Activated B cell treated with CpG ODN at 0.5 μM for 24 hours (primary cell): ENCODE measurements at regions of chr19 and their contacts with region 1.

Region 1: DNA sequence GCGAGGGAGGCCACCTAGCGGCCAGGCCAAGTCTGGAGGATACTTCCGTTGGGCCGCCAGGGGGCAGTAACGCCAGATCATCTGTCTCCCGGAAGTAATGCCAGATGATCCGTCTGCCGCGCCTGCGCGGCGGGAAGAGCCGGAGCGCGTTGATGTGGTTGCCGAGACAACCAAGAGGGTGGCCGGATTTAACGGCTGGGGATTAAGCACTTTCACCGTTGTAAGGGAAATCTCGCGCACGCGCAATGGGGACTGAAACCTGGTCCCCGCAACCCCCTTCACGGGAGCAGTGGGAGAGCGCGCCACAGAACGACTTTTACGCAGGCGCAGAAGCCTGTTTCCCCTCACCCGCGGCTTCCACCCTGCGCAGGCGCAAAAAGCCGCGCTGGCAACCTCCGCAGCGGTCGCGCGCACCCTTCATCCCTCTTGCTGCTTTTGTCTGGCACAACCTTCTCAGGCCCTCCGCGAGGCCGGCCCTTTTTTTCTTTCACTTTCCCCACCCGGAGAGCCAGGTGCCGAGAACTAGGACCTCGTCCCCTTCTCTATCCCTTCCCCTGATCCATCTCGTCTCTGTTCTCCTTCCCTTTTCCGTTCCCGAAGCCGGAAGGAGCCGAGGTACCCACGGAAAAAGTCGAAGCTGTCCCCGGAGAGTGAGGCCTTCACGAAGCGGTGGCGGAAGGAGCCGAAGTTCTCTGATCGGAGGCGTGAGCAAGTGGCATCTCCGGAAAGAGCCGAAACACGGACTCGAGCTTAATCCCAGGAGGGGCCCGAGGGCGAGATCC is 886 bp upstream of the U2AF2 start:
- DNase-seq: peak; percentile 95
- ATAC-seq: peak; percentile 77
- H3K4me3 Mint-ChIP-seq: peak overlapping the region; percentile 95
- H3K27ac Mint-ChIP-seq: peak overlapping the region; percentile 98
- H3K4me1 Mint-ChIP-seq: peaks cover 56% of the 10 kb centered on the region
- H3K27me3 Mint-ChIP-seq: no peaks in the 10 kb centered on the region
- CTCF ChIP-seq: peak; percentile 97

Region 2: DNA sequence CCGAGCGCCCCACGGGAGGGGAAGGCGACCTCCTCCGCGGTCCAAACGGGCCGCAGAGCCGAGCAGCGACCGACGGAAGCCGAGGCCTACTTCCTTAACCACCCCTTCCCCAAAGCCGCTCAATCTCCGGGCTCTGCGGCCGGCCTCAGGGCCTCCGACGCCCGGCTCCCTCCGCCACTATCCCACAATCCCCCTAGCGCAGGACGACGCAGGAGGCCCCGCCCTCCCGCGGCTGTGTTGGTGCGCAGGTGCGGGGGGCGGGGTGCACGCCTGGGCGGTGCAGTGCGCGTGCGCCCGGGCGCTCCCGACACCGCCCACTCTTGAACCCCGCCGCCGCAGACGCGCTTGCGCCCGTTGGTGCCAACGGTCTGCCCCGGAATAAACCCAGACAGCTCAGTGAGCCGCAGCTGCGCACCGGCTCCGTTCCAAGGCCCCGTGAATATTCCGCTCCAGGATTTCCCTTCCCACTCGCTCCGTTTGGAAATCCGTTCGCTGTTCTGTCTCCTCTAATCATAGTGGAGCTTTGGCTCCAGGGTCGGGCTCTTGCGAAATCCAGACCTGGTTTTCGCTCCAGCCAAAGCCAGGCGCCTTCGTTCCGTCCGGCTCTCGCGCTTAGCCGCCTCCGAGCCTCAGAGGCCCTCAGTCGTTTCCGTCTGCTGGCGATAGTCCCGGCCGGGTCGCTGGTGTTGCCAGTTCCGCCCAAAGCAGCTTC is 395.0 kb before region 1 on chr19 and contains the start of gene PPP6R1:
- CTCF ChIA-PET with region 1: no interaction called
- POLR2A ChIA-PET with region 1: interaction called, 12 read pairs
- intact Hi-C with region 1: no loop called
- DNase-seq: peak; percentile 94
- ATAC-seq: peak; percentile 75
- H3K4me3 Mint-ChIP-seq: peak within 1 kb of the TSS; percentile 98
- H3K27ac Mint-ChIP-seq: peak within 1 kb of the TSS; percentile 100
- H3K4me1 Mint-ChIP-seq: peaks cover 52% of the 10 kb centered on the region
- H3K27me3 Mint-ChIP-seq: no peaks in the 10 kb centered on the region
- CTCF ChIP-seq: no peak
- total RNA-seq, gene PPP6R1: 203 and 220 TPM in 2 replicates

Region 3: GRCh38 chr19:55407800-55408532 is 246.0 kb before region 1 on chr19:
- CTCF ChIA-PET with region 1: no interaction called
- POLR2A ChIA-PET with region 1: interaction called, 4 read pairs
- intact Hi-C with region 1: loop called (anchors 1 kb)
- DNase-seq: peak; percentile 95
- ATAC-seq: peak; percentile 88
- H3K4me3 Mint-ChIP-seq: peak overlapping the region; percentile 91
- H3K27ac Mint-ChIP-seq: peak overlapping the region; percentile 98
- H3K4me1 Mint-ChIP-seq: peaks cover 24% of the 10 kb centered on the region
- H3K27me3 Mint-ChIP-seq: no peaks in the 10 kb centered on the region
- CTCF ChIP-seq: no peak

Region 4: DNA sequence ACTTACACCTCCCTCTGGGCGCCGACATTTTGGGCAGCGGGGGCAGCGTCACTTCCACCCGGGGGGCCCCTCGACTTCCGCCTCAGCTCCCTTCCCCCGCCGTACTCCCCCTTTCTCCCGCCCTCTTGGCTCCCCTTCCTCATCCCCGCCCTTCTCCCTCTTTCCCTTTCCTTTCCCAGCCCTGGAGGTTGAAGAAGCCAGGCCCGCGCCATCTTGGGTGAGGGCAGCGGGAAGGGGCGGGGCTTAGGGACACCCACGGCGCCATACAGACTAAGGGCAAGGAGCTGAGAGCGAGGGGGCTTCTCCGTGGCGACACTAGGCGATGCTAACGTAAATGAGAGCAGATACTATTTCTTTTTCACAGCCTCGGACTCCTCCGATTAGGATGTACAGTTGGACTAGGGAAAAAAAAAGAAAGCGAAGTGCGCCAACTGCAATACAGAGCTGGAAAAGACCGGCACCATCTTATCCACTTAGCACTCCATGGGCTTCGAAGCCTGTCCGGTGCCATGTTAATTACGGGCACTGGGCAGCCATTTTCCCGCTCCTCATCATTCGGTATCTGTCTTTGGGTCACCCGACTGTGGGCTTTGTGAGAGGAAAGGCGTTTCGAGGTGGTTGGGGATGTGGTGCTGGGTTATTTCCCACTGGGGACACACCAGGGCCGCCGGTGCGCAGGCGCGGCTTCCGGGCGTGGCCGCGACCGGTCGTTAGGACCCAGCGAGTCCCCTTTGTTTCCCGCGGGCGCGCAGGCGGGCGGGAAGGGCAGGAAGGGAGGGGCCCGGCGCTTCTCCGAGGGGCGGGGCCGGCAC is 54.3 kb before region 1 on chr19 and contains the start of gene FIZ1:
- CTCF ChIA-PET with region 1: no interaction called
- POLR2A ChIA-PET with region 1: interaction called, 45 read pairs
- intact Hi-C with region 1: loop called (anchors 1 kb)
- DNase-seq: peak; percentile 92
- ATAC-seq: peak; percentile 69
- H3K4me3 Mint-ChIP-seq: peak within 1 kb of the TSS; percentile 99
- H3K27ac Mint-ChIP-seq: peak within 1 kb of the TSS; percentile 99
- H3K4me1 Mint-ChIP-seq: peaks cover 19% of the 10 kb centered on the region
- H3K27me3 Mint-ChIP-seq: no peaks in the 10 kb centered on the region
- CTCF ChIP-seq: no peak
- total RNA-seq, gene FIZ1: 17.5 and 21.2 TPM in 2 replicates

Region 5: GRCh38 chr19:55632463-55632834 is 21.5 kb before region 1 on chr19:
- CTCF ChIA-PET with region 1: interaction called, 12 read pairs
- POLR2A ChIA-PET with region 1: interaction called, 55 read pairs
- intact Hi-C with region 1: loop called (anchors 1 kb)
- DNase-seq: peak; percentile 44
- ATAC-seq: peak; percentile 57
- H3K4me3 Mint-ChIP-seq: peak overlapping the region; percentile 60
- H3K27ac Mint-ChIP-seq: peak overlapping the region; percentile 37
- H3K4me1 Mint-ChIP-seq: peaks cover 40% of the 10 kb centered on the region
- H3K27me3 Mint-ChIP-seq: no peaks in the 10 kb centered on the region
- CTCF ChIP-seq: no peak

Region 6: GRCh38 chr19:55674841-55675660 is 21.1 kb after region 1 on chr19 and contains the start of gene EPN1:
- CTCF ChIA-PET with region 1: interaction called, 7 read pairs
- POLR2A ChIA-PET with region 1: interaction called, 11 read pairs
- intact Hi-C with region 1: loop called (anchors 1 kb)
- DNase-seq: peak; percentile 93
- ATAC-seq: peak; percentile 65
- H3K4me3 Mint-ChIP-seq: peak within 1 kb of the TSS; percentile 89
- H3K27ac Mint-ChIP-seq: peak within 1 kb of the TSS; percentile 83
- H3K4me1 Mint-ChIP-seq: peaks cover 69% of the 10 kb centered on the region
- H3K27me3 Mint-ChIP-seq: no peaks in the 10 kb centered on the region
- CTCF ChIP-seq: no peak
- total RNA-seq, gene EPN1: 56.6 and 65.2 TPM in 2 replicates